ENCODE measurements at regions of chr4 and their contacts with region 1.

Region 1: GRCh38 chr4:106502106-106502699 is 133.6 kb upstream of the GIMD1 start:
- DNase-seq: peak; percentile 47 to 72 (median 62)
- H3K4me3 ChIP-seq: no peak overlapping the region
- H3K27ac ChIP-seq: no peak overlapping the region
- H3K4me1 ChIP-seq: no peaks in the 10 kb centered on the region
- H3K27me3 ChIP-seq: no peaks in the 10 kb centered on the region

Region 2: DNA sequence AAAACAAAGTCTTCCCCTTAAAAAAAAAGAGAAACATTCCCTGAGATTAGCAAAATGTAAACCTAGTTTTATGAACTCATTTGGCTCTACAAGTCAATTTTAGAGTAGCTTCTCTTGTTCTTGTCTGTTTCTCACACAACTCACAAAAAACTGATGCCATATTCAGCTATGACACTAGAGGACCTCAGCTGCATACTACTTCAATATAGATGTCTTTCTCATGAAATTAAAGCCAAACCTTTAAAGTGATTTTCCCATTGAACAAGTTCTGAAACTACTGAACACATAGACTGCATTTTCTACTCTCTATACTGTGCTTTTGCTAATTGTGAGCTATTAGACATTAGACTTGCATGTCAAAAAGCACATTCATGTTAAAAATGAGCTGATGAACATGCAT is 236.0 kb before region 1 on chr4:
- CTCF ChIA-PET with region 1: interaction called, 15 read pairs
- POLR2A ChIA-PET with region 1: no interaction called
- DNase-seq: peak; percentile 38 to 77 (median 74)
- H3K4me3 ChIP-seq: no peak overlapping the region
- H3K27ac ChIP-seq: no peak overlapping the region
- H3K4me1 ChIP-seq: no peaks in the 10 kb centered on the region
- H3K27me3 ChIP-seq: no peaks in the 10 kb centered on the region

Measured in common myeloid progenitor, CD34-positive (primary cell).